ENCODE measurements at regions of chr4 and their contacts with region 1.

Region 1: GRCh38 chr4:86497980-86498862 is 95.9 kb upstream of the PTPN13 start:
- DNase-seq: peak; percentile 67
- H3K4me3 Mint-ChIP-seq: no peak overlapping the region
- H3K27ac Mint-ChIP-seq: no peak overlapping the region
- H3K4me1 Mint-ChIP-seq: peaks cover 6% of the 10 kb centered on the region
- H3K27me3 Mint-ChIP-seq: no peaks in the 10 kb centered on the region
- CTCF ChIP-seq: peak; percentile 62

Region 2: DNA sequence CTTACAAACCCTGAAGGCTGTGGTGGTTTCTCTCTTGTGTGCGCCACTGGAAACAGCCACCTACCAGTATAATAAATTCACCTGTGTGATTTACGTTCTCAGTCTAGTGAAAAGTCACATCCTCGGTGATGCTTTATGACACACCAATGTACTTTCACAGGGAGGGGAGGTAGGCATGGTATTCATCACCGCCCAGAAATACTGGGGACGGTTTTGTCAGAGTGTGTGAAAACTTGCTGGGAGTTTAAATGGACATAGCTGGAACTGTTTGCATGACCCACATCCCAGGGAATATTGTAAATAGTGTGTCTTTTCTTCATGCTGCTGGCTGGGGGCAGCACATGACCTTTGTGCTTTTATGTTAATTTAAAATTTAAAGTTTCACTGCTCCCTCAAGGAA is 560.2 kb before region 1 on chr4:
- CTCF ChIA-PET with region 1: no interaction called
- POLR2A ChIA-PET with region 1: no interaction called
- intact Hi-C with region 1: no loop called
- DNase-seq: no peak
- H3K4me3 Mint-ChIP-seq: no peak overlapping the region
- H3K27ac Mint-ChIP-seq: no peak overlapping the region
- H3K4me1 Mint-ChIP-seq: no peaks in the 10 kb centered on the region
- H3K27me3 Mint-ChIP-seq: no peaks in the 10 kb centered on the region
- CTCF ChIP-seq: no peak

Region 3: DNA sequence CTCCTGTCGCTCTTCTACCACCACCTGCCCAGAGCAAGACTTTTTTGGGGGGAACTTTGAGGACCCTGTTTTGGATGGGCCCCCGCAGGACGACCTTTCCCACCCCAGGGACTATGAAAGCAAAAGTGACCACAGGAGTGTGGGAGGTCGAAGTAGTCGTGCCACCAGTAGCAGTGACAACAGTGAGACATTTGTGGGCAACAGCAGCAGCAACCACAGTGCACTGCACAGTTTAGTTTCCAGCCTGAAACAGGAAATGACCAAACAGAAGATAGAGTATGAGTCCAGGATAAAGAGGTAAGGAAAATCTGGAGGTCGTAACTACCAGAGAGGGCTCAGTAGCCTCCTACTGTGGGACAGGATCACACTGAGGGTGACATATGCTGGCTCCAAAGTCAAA is 502.9 kb before region 1 on chr4:
- CTCF ChIA-PET with region 1: no interaction called
- POLR2A ChIA-PET with region 1: no interaction called
- intact Hi-C with region 1: no loop called
- DNase-seq: no peak
- H3K4me3 Mint-ChIP-seq: no peak overlapping the region
- H3K27ac Mint-ChIP-seq: no peak overlapping the region
- H3K4me1 Mint-ChIP-seq: no peaks in the 10 kb centered on the region
- H3K27me3 Mint-ChIP-seq: no peaks in the 10 kb centered on the region
- CTCF ChIP-seq: no peak

Region 4: DNA sequence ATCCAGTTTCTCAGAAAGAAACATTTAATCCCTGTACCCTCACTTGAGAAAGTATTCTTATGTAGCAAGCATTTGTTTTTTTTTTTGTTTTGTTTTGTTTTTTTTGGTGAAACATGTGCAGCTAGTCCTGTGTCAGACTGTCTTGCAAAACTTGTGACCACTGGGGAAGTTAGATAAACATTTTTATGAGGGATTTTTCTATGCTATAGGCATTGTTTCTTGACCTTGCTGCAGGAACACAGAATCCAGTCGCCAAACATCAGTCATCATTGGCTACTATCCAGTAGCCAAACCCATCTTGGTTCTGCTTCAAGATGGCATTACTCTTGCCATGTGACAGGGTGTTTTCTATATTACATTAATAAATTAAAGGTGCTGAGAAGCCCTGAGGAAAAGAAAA is 130.6 kb before region 1 on chr4:
- CTCF ChIA-PET with region 1: no interaction called
- POLR2A ChIA-PET with region 1: no interaction called
- intact Hi-C with region 1: no loop called
- DNase-seq: peak; percentile 77
- H3K4me3 Mint-ChIP-seq: no peak overlapping the region
- H3K27ac Mint-ChIP-seq: no peak overlapping the region
- H3K4me1 Mint-ChIP-seq: peaks cover 14% of the 10 kb centered on the region
- H3K27me3 Mint-ChIP-seq: no peaks in the 10 kb centered on the region
- CTCF ChIP-seq: no peak

Region 5: DNA sequence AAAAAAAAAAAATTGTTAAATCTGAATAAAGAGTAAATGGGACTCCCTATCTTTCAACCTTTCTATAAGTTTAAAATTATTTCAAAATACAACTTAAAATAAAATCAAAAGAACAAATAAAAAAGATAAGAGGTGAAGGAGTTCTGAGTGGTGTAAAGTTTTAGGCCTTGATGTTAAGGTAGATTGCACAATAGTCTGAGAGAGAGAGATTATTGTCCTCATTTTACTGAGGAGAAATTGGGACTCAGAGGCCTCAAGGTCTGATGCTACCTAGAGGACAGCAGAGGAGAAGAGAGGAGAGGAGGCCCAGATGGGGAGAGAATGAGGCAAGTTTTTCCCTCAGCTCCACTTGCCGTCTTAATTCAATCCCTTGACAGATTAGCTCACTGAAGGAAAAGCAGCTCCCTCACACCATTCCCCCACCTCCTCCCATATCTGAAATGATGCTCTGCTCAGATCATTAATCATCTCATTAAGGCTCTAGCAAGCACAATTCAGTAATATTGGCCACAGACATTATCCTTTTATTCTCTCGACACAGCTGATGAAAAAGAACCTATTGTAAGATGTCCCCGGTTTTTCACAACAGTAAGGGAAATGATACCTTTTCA is 10.4 kb before region 1 on chr4:
- CTCF ChIA-PET with region 1: interaction called, 14 read pairs
- POLR2A ChIA-PET with region 1: interaction called, 3 read pairs
- intact Hi-C with region 1: no loop called
- DNase-seq: no peak
- H3K4me3 Mint-ChIP-seq: no peak overlapping the region
- H3K27ac Mint-ChIP-seq: no peak overlapping the region
- H3K4me1 Mint-ChIP-seq: peaks cover 4% of the 10 kb centered on the region
- H3K27me3 Mint-ChIP-seq: no peaks in the 10 kb centered on the region
- CTCF ChIP-seq: no peak

Region 6: DNA sequence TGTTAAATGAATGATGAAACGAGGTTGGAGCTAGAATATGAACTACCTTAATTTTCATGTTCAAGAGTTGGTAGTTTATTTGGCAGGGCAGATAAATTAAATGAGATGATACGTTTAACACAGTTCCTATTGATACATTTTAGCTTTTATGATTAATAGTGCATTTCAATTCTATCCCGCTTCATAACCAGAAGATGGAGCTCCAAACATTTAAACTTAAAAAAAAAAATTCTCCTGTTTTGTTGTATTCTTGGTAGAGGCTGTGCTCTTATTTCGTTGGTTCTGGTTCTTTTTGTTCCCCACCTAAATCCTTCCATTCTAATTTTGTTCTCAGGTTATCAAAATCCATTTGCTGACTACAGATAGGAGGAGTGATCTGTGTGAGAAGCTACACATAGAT is 24.1 kb after region 1 on chr4:
- CTCF ChIA-PET with region 1: interaction called, 42 read pairs
- POLR2A ChIA-PET with region 1: interaction called, 3 read pairs
- intact Hi-C with region 1: no loop called
- DNase-seq: peak; percentile 17
- H3K4me3 Mint-ChIP-seq: no peak overlapping the region
- H3K27ac Mint-ChIP-seq: no peak overlapping the region
- H3K4me1 Mint-ChIP-seq: no peaks in the 10 kb centered on the region
- H3K27me3 Mint-ChIP-seq: no peaks in the 10 kb centered on the region
- CTCF ChIP-seq: peak; percentile 43

Region 7: GRCh38 chr4:86593688-86594558 is 95.7 kb after region 1 on chr4 and contains the start of gene PTPN13:
- CTCF ChIA-PET with region 1: interaction called, 28 read pairs
- POLR2A ChIA-PET with region 1: interaction called, 60 read pairs
- intact Hi-C with region 1: no loop called
- DNase-seq: peak; percentile 100
- H3K4me3 Mint-ChIP-seq: peak within 1 kb of the TSS; percentile 97
- H3K27ac Mint-ChIP-seq: peak within 1 kb of the TSS; percentile 90
- H3K4me1 Mint-ChIP-seq: peaks cover 32% of the 10 kb centered on the region
- H3K27me3 Mint-ChIP-seq: no peaks in the 10 kb centered on the region
- CTCF ChIP-seq: no peak
- total RNA-seq, gene PTPN13: 23.0 and 28.3 TPM in 2 replicates

Region 8: GRCh38 chr4:86895692-86896488 is 397.7 kb after region 1 on chr4:
- CTCF ChIA-PET with region 1: interaction called, 46 read pairs
- POLR2A ChIA-PET with region 1: interaction called, 7 read pairs
- intact Hi-C with region 1: loop called (anchors 1 kb)
- DNase-seq: peak; percentile 83
- H3K4me3 Mint-ChIP-seq: no peak overlapping the region
- H3K27ac Mint-ChIP-seq: no peak overlapping the region
- H3K4me1 Mint-ChIP-seq: peaks cover 7% of the 10 kb centered on the region
- H3K27me3 Mint-ChIP-seq: no peaks in the 10 kb centered on the region
- CTCF ChIP-seq: peak; percentile 61